ENCODE measurements at regions of chr12 and their contacts with region 1.

Region 1: GRCh38 chr12:124767066-124767821 is 96.4 kb downstream of the SCARB1 start:
- DNase-seq: peak; percentile 61
- H3K4me3 ChIP-seq: no peak overlapping the region
- H3K27ac ChIP-seq: peak overlapping the region in 1 of 2 donors; percentile 2
- H3K4me1 ChIP-seq: no peaks in the 10 kb centered on the region
- H3K27me3 ChIP-seq: no peaks in the 10 kb centered on the region
- CTCF ChIP-seq: peak; percentile 98 to 100 (median 98)
- POLR2A ChIP-seq: no peak

Region 2: GRCh38 chr12:124036674-124037109 is 730.6 kb before region 1 on chr12:
- intact Hi-C with region 1: loop called (anchors 2 kb)
- DNase-seq: peak; percentile 37
- H3K4me3 ChIP-seq: no peak overlapping the region
- H3K27ac ChIP-seq: no peak overlapping the region
- H3K4me1 ChIP-seq: no peaks in the 10 kb centered on the region
- H3K27me3 ChIP-seq: no peaks in the 10 kb centered on the region
- CTCF ChIP-seq: peak; percentile 80 to 92 (median 88)
- POLR2A ChIP-seq: no peak

Region 3: DNA sequence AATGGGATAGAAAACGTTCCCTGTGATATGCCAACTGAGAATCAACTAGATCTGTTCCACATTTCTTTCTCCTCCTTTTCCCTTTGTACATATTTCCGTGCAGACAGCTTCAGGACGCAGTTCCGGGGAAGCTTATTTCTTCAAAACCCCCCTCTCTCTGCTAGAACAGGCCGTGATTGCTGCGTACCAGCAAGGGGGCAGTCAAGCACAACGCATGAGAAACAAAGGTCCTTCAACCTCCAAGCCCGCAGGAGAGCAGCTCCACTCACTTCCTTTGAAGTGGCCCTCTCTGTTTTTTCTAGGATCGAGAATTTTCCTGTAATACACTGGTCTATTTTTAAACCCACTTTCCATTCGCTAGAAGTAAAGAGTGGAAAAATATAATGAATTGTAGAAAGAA is 713.4 kb before region 1 on chr12:
- intact Hi-C with region 1: loop called (anchors 2 kb)
- DNase-seq: peak; percentile 33
- H3K4me3 ChIP-seq: no peak overlapping the region
- H3K27ac ChIP-seq: no peak overlapping the region
- H3K4me1 ChIP-seq: no peaks in the 10 kb centered on the region
- H3K27me3 ChIP-seq: no peaks in the 10 kb centered on the region
- CTCF ChIP-seq: peak in 3 of 4 experiments; percentile 53 to 77 (median 62)
- POLR2A ChIP-seq: no peak

Region 4: DNA sequence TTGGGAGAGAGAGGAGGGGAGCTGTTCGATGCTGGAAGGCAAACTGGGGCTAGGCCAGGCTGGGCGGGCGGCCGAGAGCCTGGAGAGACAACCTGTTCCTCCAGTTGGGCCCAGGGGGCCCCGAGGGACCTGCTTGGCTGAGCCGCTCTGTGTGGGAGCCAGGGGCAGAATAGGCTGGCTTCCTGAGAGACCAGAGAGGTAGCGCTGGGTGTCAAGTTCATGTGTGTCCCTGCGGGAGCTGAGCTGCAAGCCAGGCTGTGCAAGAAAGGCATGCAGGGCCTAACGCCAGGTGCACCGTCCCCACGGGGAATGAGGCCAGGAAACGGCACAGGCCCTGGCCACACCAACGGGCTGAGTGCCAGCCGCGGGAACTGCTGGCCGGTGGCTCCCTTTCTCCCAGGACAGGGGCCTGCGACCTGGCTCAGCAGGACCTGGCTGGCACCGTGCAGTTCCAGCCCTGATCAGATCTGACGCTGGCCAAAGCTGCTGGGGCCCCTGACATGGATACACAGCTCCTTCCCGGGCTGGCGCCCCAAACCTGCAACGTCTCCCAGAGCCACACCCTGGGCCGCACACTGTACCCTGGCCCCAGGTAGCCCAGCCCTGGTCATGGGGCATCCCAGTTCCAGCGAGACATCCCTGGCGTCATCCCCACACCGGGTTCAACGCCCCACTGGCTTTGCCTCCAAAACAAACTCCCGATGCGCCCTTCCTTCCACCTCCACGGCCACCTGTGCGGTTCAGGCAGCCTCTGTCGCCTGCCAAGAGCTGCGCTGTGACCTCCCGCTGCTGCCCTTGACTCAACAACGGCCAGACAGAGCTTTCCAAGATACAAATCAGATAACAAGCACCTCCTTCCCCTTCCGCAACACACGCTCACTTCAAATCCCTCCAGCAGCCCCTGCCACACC is 407.3 kb before region 1 on chr12:
- intact Hi-C with region 1: loop called (anchors 5 kb)
- DNase-seq: peak; percentile 93
- H3K4me3 ChIP-seq: no peak overlapping the region
- H3K27ac ChIP-seq: peak overlapping the region; percentile 76
- H3K4me1 ChIP-seq: peaks cover 29% of the 10 kb centered on the region
- H3K27me3 ChIP-seq: no peaks in the 10 kb centered on the region
- CTCF ChIP-seq: peak in 1 of 4 experiments; percentile 18
- POLR2A ChIP-seq: no peak

Region 5: DNA sequence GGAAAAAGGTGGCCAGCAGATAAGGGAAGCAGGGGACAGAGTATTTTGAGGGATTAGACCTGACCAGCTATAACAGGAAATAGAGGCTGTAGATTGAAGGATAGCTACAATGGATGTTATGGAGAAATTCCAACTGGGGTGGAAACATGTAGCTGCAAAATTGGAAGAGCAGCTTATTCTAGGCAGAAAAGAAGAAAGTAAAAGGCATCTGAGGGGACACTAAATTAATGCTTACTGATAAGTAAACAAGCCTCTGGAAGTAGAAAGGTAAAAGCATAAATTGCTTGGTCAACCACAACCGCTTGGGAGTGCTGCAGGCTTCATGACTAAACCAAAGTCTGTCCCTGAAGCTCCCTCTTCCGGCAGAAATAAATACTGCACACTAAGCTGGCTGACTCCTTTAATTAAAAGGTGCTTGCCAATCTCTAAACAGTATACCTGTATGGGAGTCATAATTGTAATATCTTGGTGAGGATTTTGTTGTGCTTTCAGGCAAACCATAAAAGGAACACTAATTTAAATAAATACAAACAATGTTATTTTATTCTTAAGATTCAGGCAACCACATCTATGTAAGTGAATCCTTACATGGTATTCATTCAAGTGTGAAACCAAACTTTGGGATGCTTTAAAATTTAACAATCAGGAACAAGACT is 139.5 kb after region 1 on chr12:
- intact Hi-C with region 1: loop called (anchors 10 kb)
- DNase-seq: peak; percentile 96
- H3K4me3 ChIP-seq: no peak overlapping the region
- H3K27ac ChIP-seq: peak overlapping the region; percentile 36 to 46
- H3K4me1 ChIP-seq: peaks cover 11% of the 10 kb centered on the region
- H3K27me3 ChIP-seq: no peaks in the 10 kb centered on the region
- CTCF ChIP-seq: peak; percentile 94 to 99 (median 98)
- POLR2A ChIP-seq: no peak

Region 6: DNA sequence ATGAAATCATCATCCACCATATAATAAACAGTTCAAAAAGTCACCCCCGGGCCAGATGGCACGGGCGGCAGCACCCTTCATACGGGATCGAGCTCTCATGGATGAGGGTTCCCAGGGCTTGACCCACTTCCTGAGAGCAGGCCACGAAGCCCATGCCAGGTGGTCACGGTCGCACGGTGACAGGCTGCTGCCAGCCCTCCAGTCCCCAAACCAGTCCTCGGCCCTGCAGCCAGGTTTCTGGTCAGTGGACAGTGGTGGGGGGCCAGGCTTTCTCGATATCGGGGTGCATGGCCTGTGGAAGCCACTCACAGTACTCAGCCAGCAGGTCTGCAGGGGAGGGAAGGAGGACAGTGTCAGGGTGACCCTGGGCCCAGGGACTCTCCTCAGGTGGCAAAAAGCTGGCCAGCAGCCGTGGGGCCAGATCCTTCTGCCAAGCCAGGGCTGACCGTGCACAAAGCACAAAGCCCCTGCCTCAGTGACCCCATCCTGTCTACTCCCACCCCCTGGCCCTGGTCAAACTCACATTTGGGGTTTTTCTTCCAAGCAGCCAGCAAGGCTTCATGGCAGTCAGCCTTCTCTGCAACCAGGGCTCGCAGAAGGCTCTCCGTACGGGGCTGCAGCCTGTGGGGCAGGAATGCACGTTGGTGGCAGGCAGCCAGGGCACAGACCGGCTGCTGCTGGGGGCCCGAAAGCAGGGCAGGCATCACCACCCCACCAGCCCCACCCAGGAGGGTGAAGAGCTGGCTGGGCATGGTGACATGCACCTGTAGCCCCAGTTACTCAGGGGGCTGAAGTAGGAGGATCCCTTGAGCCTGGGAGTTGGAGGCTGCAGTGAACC is 180.5 kb after region 1 on chr12:
- intact Hi-C with region 1: no loop called
- DNase-seq: no peak
- H3K4me3 ChIP-seq: no peak overlapping the region
- H3K27ac ChIP-seq: no peak overlapping the region
- H3K4me1 ChIP-seq: no peaks in the 10 kb centered on the region
- H3K27me3 ChIP-seq: no peaks in the 10 kb centered on the region
- CTCF ChIP-seq: no peak
- POLR2A ChIP-seq: no peak